HCT116 (cell line): ENCODE measurements at regions of chr17 and their contacts with region 1.

Region 1: GRCh38 chr17:72592242-72592966 is 471.6 kb downstream of the SOX9 start:
- DNase-seq: peak; percentile 86
- ATAC-seq: peak; percentile 76
- H3K4me3 ChIP-seq: peak overlapping the region; percentile 81 to 87
- H3K27ac ChIP-seq: peak overlapping the region; percentile 69
- H3K4me1 ChIP-seq: peaks cover 38 to 64% of the 10 kb centered on the region in 2 experiments
- H3K27me3 ChIP-seq: no peaks in the 10 kb centered on the region
- CTCF ChIP-seq: 0 out of 6 replicates have a peak, but pooled peaks of 1 of the 3 experiments have one; percentile 0
- POLR2A ChIP-seq: peak; percentile 99
- RAD21 ChIP-seq: no peak

Region 2: DNA sequence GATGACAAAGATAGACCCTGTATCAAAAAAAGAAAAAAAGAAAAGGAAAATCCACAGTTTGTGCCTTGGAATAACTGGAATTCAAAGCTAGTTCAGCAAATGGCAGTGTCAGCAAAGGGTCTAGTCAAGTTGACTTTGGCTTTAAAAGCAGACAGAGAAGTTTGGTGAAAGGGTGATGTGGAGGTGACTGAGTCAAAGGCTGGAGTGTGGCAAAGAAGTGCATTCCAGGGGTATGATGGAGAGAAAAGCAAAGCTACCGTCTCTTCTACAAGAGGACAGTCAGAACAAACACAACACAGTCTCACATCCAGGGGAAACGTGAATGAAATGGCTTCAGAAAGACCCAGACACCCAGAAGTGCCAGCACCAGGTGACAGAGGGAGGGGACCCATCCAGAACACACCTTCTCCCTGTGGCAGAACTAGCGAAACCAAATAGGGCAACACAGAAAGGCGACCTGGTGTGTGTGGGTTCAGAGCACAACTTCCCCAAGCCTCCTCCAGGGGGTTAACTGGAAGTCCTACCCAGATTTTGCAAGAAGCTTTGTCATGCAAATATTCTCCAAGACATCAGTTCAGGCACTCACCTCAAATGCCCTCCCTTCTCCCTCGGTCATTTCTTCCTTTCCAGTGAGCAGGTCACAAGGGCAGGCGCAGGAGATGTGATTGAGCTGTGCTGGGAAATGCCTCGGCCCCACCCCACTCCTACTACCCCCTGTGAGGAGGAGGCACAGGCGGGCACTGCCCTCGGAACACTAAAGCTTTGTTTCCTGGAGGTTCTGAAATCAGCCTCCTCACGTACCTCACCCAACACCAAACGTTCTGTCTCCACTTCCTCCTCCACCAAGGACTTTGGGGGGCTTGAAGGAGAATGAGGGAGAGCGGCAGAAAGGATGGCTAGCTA is 10.4 kb after region 1 on chr17:
- CTCF ChIA-PET with region 1: interaction called, 10 read pairs
- POLR2A ChIA-PET with region 1: interaction called, 77 read pairs
- RAD21 ChIA-PET with region 1: interaction called, 5 to 8 read pairs
- intact Hi-C with region 1: no loop called
- DNase-seq: peak; percentile 72
- ATAC-seq: peak; percentile 83
- H3K4me3 ChIP-seq: peak overlapping the region; percentile 6 to 42
- H3K27ac ChIP-seq: peak overlapping the region; percentile 59
- H3K4me1 ChIP-seq: peaks cover 29 to 58% of the 10 kb centered on the region in 2 experiments
- H3K27me3 ChIP-seq: no peaks in the 10 kb centered on the region
- CTCF ChIP-seq: peak in 2 of 3 experiments; percentile 54 to 71; a peak in 4 of 6 replicates
- POLR2A ChIP-seq: no peak
- RAD21 ChIP-seq: 0 out of 2 replicates have a peak, but pooled peaks have one; percentile 16

Region 3: DNA sequence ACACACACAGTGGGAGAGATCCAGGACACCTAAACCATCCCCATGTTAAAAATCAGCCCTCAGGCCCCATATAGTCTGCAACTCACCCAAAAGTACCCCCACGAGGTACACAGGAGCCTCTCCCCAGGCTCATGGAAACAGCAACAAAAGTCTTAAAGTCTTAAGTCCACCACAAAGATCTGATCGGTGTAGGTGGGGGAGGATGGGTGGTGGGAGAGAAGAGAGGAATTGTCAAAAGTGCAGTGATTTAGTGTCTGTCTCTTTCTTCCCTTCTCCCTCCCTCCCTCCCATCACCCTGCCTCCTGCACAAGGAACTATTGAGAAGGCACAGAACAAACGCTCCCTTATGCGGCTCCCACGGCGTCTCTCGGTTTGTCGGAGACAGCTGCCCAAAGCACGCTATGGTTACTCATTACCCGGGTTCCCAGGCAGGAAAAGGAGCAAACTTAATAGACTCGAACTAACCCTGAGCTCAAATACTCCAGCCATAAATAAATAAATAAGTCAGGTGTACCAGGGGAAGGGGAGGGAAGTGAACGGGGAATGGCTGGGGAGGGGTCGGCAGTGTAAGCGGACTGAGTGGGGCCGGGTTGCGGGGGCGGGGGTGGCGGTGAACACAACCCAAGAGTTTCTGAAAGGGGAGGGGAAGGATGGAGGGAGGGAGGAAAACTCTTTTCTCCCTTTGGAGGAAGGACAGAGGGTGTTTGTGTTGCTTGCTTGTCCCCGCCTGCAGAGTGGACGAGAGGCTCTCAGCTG is 22.6 kb after region 1 on chr17:
- CTCF ChIA-PET with region 1: interaction called, 4 read pairs
- POLR2A ChIA-PET with region 1: interaction called, 19 read pairs
- RAD21 ChIA-PET with region 1: interaction called, 3 read pairs
- intact Hi-C with region 1: no loop called
- DNase-seq: peak; percentile 81
- ATAC-seq: peak; percentile 71
- H3K4me3 ChIP-seq: peak overlapping the region; percentile 17 to 37
- H3K27ac ChIP-seq: peak overlapping the region; percentile 40
- H3K4me1 ChIP-seq: peaks cover 44 to 75% of the 10 kb centered on the region in 2 experiments
- H3K27me3 ChIP-seq: no peaks in the 10 kb centered on the region
- CTCF ChIP-seq: no peak
- POLR2A ChIP-seq: no peak
- RAD21 ChIP-seq: no peak

Region 4: DNA sequence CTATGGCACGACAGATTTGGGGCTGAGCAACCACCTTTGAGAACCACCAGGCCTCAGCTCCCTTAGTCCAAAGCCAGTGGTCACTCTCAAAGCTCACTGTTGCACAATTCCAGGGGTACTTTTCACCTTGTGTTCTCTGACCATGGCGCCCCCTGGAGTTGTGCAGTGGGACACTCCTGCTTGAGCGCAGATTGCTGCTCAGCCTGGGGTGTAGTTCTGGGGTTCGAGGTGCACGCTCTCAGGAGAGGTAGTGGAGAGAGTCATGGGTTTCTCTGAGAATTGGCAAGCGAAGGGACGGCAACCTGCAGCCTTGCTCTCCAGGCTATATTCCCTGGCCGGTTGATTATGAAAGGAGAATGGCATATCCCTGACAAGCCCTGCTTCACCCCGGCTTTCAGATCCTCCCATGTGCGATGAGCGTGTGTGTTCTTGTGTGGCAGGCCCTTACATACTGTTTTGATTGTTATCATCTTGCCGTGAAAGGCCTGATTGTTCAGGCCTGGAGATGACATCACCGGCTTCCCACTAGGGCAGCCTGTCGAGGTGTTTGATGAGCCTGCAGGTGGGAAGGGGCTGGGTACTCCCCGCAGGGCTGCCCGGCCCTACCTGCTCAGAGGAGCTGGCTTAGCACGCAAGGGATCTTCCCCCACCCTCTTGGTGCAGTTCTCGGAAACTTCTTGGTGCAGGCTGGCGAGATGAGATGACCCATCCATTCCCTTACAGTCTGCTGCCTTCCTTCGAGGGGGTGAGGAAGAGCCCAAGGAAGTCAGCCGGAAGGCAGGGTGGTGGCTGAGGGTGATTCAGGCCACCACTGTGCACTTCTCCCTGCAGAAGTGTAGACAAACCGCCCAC is 68.9 kb after region 1 on chr17:
- CTCF ChIA-PET with region 1: interaction called, 3 read pairs
- POLR2A ChIA-PET with region 1: interaction called, 14 read pairs
- RAD21 ChIA-PET with region 1: no interaction called
- intact Hi-C with region 1: no loop called
- DNase-seq: peak; percentile 97
- ATAC-seq: peak; percentile 85
- H3K4me3 ChIP-seq: peak overlapping the region in 1 of 2 experiments; percentile 39; a peak in 2 of 4 replicates
- H3K27ac ChIP-seq: peak overlapping the region; percentile 82
- H3K4me1 ChIP-seq: peaks cover 50 to 66% of the 10 kb centered on the region in 2 experiments
- H3K27me3 ChIP-seq: no peaks in the 10 kb centered on the region
- CTCF ChIP-seq: peak in 2 of 3 experiments; percentile 89 to 99; a peak in 4 of 6 replicates
- POLR2A ChIP-seq: no peak
- RAD21 ChIP-seq: peak; percentile 41; the same call in 1 of the 2 replicates

Region 5: GRCh38 chr17:72683506-72684404 is 91.4 kb after region 1 on chr17:
- CTCF ChIA-PET with region 1: no interaction called
- POLR2A ChIA-PET with region 1: interaction called, 33 read pairs
- RAD21 ChIA-PET with region 1: interaction called in 1 of 2 experiments, 3 read pairs
- intact Hi-C with region 1: loop called (anchors 5 kb)
- DNase-seq: peak; percentile 94
- ATAC-seq: peak; percentile 83
- H3K4me3 ChIP-seq: peak overlapping the region; percentile 2 to 30; a peak in 3 of 4 replicates
- H3K27ac ChIP-seq: peak overlapping the region; percentile 87
- H3K4me1 ChIP-seq: peaks cover 63 to 82% of the 10 kb centered on the region in 2 experiments
- H3K27me3 ChIP-seq: no peaks in the 10 kb centered on the region
- CTCF ChIP-seq: no peak
- POLR2A ChIP-seq: no peak
- RAD21 ChIP-seq: peak; percentile 43

Region 6: GRCh38 chr17:72725433-72726068 is 133.1 kb after region 1 on chr17:
- CTCF ChIA-PET with region 1: interaction called, 11 read pairs
- POLR2A ChIA-PET with region 1: interaction called, 7 read pairs
- RAD21 ChIA-PET with region 1: interaction called in 1 of 2 experiments, 3 read pairs
- intact Hi-C with region 1: no loop called
- DNase-seq: peak; percentile 66
- ATAC-seq: peak; percentile 83
- H3K4me3 ChIP-seq: no peak overlapping the region
- H3K27ac ChIP-seq: no peak overlapping the region
- H3K4me1 ChIP-seq: peaks cover 0 to 34% of the 10 kb centered on the region in 2 experiments; a peak in 1 of 4 replicates
- H3K27me3 ChIP-seq: no peaks in the 10 kb centered on the region
- CTCF ChIP-seq: peak; percentile 95 to 100 (median 98)
- POLR2A ChIP-seq: no peak
- RAD21 ChIP-seq: peak; percentile 98

Region 7: DNA sequence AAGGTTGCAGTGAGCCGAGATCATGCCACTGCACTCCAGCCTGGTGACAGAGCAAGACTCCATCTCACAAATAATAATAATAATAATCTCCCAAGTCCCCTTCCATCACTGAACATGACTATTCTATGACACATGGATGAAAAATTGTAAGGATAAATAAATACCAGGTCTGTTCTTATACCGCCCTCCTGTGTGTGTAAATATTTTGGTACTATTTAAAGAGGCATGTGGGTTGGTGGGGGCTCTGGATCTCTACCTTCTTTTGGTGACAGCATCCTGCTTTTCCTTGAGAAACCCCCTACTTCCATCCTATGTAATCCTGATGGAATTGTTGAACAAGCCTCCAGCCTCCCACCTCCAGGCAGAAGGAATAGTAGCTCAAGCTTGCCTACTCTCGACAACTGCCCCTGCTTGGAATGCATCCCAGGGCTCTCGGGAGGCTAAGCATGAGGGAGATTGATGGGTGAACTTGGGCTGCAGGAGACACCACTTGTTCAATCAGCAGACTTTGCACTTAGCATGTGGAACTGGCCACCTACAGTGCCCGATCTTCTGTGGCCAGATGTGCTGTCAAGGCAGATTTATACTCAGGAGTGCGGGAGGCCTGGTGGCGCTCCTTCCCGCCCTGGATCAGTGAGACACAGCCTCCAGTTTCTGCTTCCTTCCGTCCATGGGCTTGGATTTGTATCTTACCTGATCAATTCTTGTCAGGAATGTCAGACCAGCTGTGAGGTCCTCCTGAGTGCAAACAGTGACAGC is 212.7 kb after region 1 on chr17:
- CTCF ChIA-PET with region 1: no interaction called
- POLR2A ChIA-PET with region 1: no interaction called
- RAD21 ChIA-PET with region 1: no interaction called
- intact Hi-C with region 1: no loop called
- DNase-seq: no peak
- ATAC-seq: no peak
- H3K4me3 ChIP-seq: no peak overlapping the region
- H3K27ac ChIP-seq: no peak overlapping the region
- H3K4me1 ChIP-seq: no peaks in the 10 kb centered on the region
- H3K27me3 ChIP-seq: no peaks in the 10 kb centered on the region
- CTCF ChIP-seq: no peak
- POLR2A ChIP-seq: no peak
- RAD21 ChIP-seq: no peak